ENCODE measurements at regions of chr12 and their contacts with region 1.

Region 1: GRCh38 chr12:79531122-79531913 is 159.4 kb downstream of the PAWR start:
- DNase-seq: peak; percentile 46
- ATAC-seq: no peak
- H3K4me3 ChIP-seq: no peak overlapping the region
- H3K27ac ChIP-seq: peak overlapping the region; percentile 71
- H3K4me1 ChIP-seq: peaks cover 75% of the 10 kb centered on the region
- H3K27me3 ChIP-seq: no peaks in the 10 kb centered on the region
- CTCF ChIP-seq: no peak
- EP300 ChIP-seq: 0 out of 4 replicates have a peak, but pooled peaks of 1 of the 2 experiments have one; percentile 14
- POLR2A ChIP-seq: no peak
- RAD21 ChIP-seq: no peak

Region 2: DNA sequence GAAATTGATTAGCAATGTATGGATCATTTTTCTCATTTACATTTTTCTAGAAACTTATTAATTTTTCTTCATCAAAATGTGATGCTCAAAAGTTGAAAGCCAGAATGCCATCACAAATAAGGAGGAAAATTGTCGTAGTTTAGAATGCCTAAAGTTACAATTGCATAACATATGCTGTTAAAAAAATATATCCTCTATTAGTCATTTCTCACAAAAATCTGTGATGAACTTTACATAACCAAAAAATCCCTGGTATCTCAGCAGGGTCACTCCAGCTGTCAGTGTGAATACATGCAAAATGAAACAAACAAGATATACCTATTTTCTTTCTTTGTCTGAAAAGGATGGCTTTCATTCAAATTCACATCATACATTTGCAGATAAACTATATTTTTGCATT is 199.4 kb before region 1 on chr12:
- CTCF ChIA-PET with region 1: no interaction called
- POLR2A ChIA-PET with region 1: no interaction called
- in situ Hi-C with region 1: no loop called
- intact Hi-C with region 1: no loop called
- DNase-seq: no peak
- ATAC-seq: no peak
- H3K4me3 ChIP-seq: no peak overlapping the region
- H3K27ac ChIP-seq: no peak overlapping the region
- H3K4me1 ChIP-seq: no peaks in the 10 kb centered on the region
- H3K27me3 ChIP-seq: no peaks in the 10 kb centered on the region; a peak in 1 of 5 replicates
- CTCF ChIP-seq: no peak
- EP300 ChIP-seq: no peak
- POLR2A ChIP-seq: no peak
- RAD21 ChIP-seq: no peak

Region 3: GRCh38 chr12:79547735-79548609 is 16.7 kb after region 1 on chr12:
- CTCF ChIA-PET with region 1: no interaction called
- POLR2A ChIA-PET with region 1: interaction called, 54 read pairs
- in situ Hi-C with region 1: no loop called
- intact Hi-C with region 1: loop called (anchors 1 kb)
- DNase-seq: peak; percentile 91
- ATAC-seq: peak; percentile 78
- H3K4me3 ChIP-seq: peak overlapping the region in 1 of 3 experiments; percentile 1; a peak in 1 of 6 replicates
- H3K27ac ChIP-seq: peak overlapping the region; percentile 78
- H3K4me1 ChIP-seq: peaks cover 74% of the 10 kb centered on the region
- H3K27me3 ChIP-seq: no peaks in the 10 kb centered on the region
- CTCF ChIP-seq: peak; percentile 83
- EP300 ChIP-seq: peak in 1 of 2 experiments; percentile 90; a peak in 2 of 4 replicates
- POLR2A ChIP-seq: peak in 1 of 2 experiments; percentile 36; a peak in 1 of 4 replicates
- RAD21 ChIP-seq: no peak

Measured in HepG2 (cell line).